Vagina (tissue), 2 donors: ENCODE measurements at regions of chr4 and their contacts with region 1.

Region 1: GRCh38 chr4:168907119-168907698 is 102.8 kb downstream of the CBR4 start:
- DNase-seq: no peak
- H3K4me3 ChIP-seq: no peak overlapping the region
- H3K27ac ChIP-seq: peak overlapping the region; percentile 63
- H3K4me1 ChIP-seq: peaks cover 17% of the 10 kb centered on the region
- H3K27me3 ChIP-seq: no peaks in the 10 kb centered on the region
- CTCF ChIP-seq: no peak
- POLR2A ChIP-seq: no peak

Region 2: GRCh38 chr4:168859888-168860694 is 47.1 kb before region 1 on chr4:
- intact Hi-C with region 1: loop called (anchors 2 kb)
- DNase-seq: no peak
- H3K4me3 ChIP-seq: no peak overlapping the region
- H3K27ac ChIP-seq: peak overlapping the region; percentile 56
- H3K4me1 ChIP-seq: peaks cover 70% of the 10 kb centered on the region
- H3K27me3 ChIP-seq: no peaks in the 10 kb centered on the region
- CTCF ChIP-seq: no peak
- POLR2A ChIP-seq: no peak

Region 3: DNA sequence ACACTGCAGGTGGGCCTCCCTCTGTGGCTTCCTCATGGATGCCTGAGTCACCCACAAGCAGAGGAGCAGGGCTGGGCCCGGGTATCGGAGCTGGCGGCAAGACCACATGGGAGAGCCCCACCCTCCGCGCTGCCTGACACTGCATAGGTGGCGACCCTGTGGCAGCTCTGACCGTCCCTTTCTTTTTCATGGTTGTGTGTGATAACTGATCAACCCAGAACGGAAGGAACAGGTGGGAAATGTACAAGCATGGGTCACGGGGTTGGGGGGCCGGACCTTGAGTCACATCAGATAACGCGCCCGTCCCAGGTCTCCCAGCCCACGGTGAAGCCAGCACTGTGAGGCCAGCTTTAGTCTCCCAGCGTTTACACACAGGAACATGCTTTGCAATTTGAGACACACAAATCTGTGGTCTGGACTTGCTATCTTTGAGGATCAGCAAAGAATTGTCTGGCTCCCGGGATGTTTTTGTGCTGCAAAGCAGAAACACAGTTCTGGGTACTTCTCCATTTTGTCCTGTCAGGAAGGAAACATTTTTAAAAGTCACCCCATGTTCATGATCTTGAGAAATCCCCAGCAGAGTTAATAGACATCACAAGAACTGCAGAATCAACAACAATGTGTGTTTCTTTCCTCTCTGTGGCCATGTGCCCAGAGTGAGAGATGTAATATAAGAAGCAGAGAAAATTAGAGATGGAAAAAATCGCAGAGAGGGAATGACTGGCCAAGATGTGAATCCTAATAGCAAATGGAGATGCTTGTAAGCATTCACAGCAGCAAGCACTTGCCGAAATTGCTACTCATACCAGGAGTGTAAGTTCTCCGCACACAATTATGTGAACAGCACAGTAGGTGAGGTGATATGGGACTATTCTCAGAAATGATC is 173.0 kb after region 1 on chr4:
- intact Hi-C with region 1: no loop called
- DNase-seq: no peak
- H3K4me3 ChIP-seq: peak overlapping the region; percentile 15 to 35
- H3K27ac ChIP-seq: peak overlapping the region; percentile 78
- H3K4me1 ChIP-seq: peaks cover 14% of the 10 kb centered on the region
- H3K27me3 ChIP-seq: no peaks in the 10 kb centered on the region
- CTCF ChIP-seq: no peak
- POLR2A ChIP-seq: no peak